Common myeloid progenitor, CD34-positive (primary cell): ENCODE measurements at regions of chr12 and their contacts with region 1.

Region 1: DNA sequence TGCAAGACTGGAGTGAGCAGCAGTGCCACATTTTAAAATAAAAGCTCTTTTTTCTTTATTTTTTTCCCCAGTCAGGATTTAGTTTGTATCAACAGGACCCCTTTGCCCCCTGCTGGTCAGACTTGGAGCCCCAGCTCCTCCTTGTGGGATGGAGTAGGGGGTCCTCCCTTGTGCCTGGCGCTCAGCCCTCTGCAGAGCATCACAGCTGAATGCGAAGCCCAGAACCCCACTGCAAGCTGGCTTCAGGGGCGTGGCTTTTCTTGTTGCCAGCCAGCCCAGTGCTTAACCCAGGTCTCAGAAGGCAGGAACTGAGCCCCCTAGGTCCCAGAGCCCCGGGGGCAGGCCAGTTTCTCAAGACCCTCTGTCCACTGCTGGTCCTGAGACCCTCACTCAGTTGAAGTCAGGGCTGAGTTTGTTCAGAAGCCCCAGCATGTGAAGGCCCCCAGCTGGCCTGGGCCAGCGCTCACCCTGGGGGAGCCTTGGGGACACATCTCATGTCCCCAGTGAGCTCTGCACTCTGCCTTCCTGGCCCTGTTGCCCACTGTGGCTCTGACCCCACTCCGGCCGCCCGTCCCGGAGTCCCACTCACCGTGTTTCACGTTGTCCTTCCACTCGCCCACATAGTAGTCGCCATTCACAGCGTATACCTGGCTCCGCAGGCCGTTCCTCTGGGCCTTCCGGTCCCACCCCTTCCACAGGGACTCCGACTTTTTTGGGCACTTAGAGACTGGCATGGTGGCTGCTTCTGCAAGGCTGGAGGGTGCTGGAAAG is 519 bp downstream of the MORN3 start:
- DNase-seq: peak; percentile 77 to 86 (median 81)
- H3K4me3 ChIP-seq: no peak overlapping the region
- H3K27ac ChIP-seq: no peak overlapping the region
- H3K4me1 ChIP-seq: peaks cover 3 to 48% (median 34%) of the 10 kb centered on the region in 4 experiments
- H3K27me3 ChIP-seq: no peaks in the 10 kb centered on the region

Region 2: GRCh38 chr12:121499929-121500793 is 168.8 kb before region 1 on chr12:
- CTCF ChIA-PET with region 1: interaction called, 15 read pairs
- POLR2A ChIA-PET with region 1: no interaction called
- DNase-seq: peak; percentile 46 to 66 (median 58)
- H3K4me3 ChIP-seq: no peak overlapping the region
- H3K27ac ChIP-seq: no peak overlapping the region
- H3K4me1 ChIP-seq: peaks cover 3 to 8% (median 7%) of the 10 kb centered on the region in 4 experiments
- H3K27me3 ChIP-seq: no peaks in the 10 kb centered on the region

Region 3: GRCh38 chr12:121560392-121561008 is 108.4 kb before region 1 on chr12:
- CTCF ChIA-PET with region 1: interaction called, 36 read pairs
- POLR2A ChIA-PET with region 1: no interaction called
- DNase-seq: peak in 1 of 3 donors; percentile 27
- H3K4me3 ChIP-seq: no peak overlapping the region
- H3K27ac ChIP-seq: no peak overlapping the region
- H3K4me1 ChIP-seq: no peaks in the 10 kb centered on the region
- H3K27me3 ChIP-seq: no peaks in the 10 kb centered on the region

Region 4: GRCh38 chr12:121637231-121637914 is 31.6 kb before region 1 on chr12:
- CTCF ChIA-PET with region 1: interaction called, 43 read pairs
- POLR2A ChIA-PET with region 1: no interaction called
- DNase-seq: peak in 2 of 3 donors; percentile 24 to 55
- H3K4me3 ChIP-seq: peak overlapping the region in 3 of 7 experiments; percentile 4 to 50 (median 9)
- H3K27ac ChIP-seq: peak overlapping the region; percentile 40 to 71
- H3K4me1 ChIP-seq: peaks cover 2 to 55% (median 35%) of the 10 kb centered on the region in 4 experiments
- H3K27me3 ChIP-seq: no peaks in the 10 kb centered on the region

Region 5: GRCh38 chr12:121657305-121658008 is 11.5 kb before region 1 on chr12:
- CTCF ChIA-PET with region 1: interaction called, 19 read pairs
- POLR2A ChIA-PET with region 1: no interaction called
- DNase-seq: no peak
- H3K4me3 ChIP-seq: no peak overlapping the region
- H3K27ac ChIP-seq: peak overlapping the region in 1 of 2 experiments; percentile 43
- H3K4me1 ChIP-seq: peaks cover 0 to 62% (median 53%) of the 10 kb centered on the region in 4 experiments
- H3K27me3 ChIP-seq: no peaks in the 10 kb centered on the region

Region 6: DNA sequence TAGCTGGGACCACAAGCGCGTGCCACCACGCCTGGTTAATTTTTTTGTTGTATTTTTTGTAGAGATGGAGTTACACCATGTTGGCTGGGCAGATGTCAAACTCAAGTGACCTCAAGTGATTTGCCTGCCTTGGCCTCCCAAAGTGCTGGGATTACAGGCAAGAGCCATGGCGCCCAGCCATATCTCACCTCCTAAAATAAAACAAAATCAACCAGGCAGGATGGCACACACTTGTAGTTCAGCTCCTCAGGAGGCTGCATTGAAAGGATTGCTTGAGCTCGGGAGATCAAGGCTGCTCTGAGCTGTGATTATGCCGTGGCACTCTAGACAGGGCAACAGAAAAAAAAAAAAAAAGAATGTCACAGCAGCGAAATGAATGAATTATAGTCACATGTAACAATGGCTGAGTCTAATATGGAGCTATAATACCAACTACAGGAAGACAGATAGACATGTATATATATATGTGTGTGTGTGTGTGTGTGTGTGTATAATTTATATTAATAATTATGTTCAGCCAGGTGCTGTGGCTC is 24.3 kb after region 1 on chr12:
- CTCF ChIA-PET with region 1: no interaction called
- POLR2A ChIA-PET with region 1: no interaction called
- DNase-seq: no peak
- H3K4me3 ChIP-seq: no peak overlapping the region
- H3K27ac ChIP-seq: no peak overlapping the region
- H3K4me1 ChIP-seq: peaks cover 0 to 3% (median 0%) of the 10 kb centered on the region in 4 experiments
- H3K27me3 ChIP-seq: no peaks in the 10 kb centered on the region